ENCODE measurements at regions of chr6 and their contacts with region 1.

Region 1: DNA sequence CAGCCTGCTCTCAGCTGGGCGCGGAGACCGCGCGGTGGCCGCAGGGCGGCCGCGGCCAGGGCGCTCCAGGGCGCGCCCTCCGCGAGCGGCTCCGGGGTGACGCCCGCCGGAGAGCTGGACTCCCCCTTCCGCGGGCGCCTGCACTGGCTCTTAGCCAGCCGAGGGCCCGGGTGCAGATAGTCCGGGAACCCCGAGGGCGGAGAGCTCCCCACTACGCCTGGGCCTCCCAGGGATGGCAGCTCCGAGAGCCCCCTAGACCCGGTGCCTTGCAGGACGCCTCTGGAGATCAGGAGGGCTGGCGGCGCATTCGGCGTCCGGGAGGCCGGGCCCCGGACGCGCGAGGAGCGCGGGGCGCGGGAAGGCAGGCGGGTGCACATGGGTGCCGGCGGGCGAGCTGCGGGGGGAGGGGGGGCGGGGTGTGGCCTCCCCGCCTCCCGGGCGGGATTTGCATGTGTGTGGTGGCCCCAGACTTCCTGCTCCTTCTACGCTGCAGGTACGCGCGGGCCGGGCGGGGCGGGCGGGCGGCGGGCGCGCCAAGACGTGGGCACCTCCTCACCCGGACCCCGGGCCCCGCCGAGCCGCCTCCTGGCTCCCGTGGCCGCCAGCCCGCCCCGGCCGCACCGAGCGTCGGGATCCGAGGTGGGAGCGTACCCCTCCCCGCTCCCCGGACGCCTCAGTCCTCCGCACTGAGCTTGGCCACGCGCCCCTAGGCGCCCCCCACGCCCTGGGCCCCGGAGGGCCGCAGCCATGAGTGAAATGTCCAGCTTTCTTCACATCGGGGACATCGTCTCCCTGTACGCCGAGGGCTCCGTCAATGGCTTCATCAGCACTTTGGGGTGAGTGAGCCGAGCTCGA is at the start of gene ITPR3:
- DNase-seq: no peak
- H3K4me3 ChIP-seq: peak within 1 kb of the TSS; percentile 62
- H3K27me3 ChIP-seq: no peaks in the 10 kb centered on the region
- CTCF ChIP-seq: no peak
- polyA plus RNA-seq, gene ITPR3: 8.6 and 16.6 TPM in 2 replicates

Region 2: DNA sequence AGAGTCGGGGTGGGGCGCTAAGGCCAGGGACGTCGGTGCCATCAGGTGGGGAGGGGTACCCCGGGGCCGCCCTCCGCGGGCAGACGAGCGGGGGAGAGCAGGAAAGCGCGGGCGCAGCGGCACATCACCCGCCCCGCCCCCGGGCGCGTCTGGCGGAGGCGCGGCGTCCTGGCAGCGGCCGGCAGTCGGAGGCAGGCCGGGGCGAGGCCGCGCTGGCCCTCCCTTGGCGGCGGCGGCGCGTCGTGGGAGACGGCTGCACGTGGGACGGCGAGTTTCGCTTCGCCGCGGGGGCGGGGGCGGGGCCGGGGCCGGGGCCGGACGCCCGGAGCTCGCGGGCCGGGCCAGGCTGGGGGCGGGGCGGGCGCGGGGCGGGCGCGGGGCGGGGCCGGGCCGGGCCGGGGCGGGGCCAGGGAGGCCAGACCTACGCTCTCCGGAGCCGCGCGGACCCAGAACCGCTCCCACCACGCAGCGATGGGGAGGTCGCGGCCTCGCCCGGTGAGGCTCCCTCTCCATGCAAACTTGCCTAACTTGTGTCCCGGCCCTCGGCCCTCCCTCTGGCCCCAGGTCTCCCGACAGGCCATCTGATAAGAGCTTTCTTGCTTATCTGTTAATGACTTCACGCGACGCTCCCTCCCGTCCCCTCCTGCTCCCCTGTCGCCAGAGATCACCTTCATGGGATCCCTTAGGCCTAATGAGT is 12.5 kb after region 1 on chr6:
- CTCF ChIA-PET with region 1: interaction called, 14 read pairs
- POLR2A ChIA-PET with region 1: no interaction called
- DNase-seq: no peak
- H3K4me3 ChIP-seq: peak overlapping the region; percentile 53
- H3K27me3 ChIP-seq: no peaks in the 10 kb centered on the region
- CTCF ChIP-seq: no peak

Measured in BJ (cell line).